CD8-positive, alpha-beta T cell (primary cell): ENCODE measurements at regions of chr13 and their contacts with region 1.

Region 1: GRCh38 chr13:48126944-48127830 is 32.3 kb upstream of the MED4 start:
- DNase-seq: peak; percentile 11 to 84 (median 39)
- ATAC-seq: peak; percentile 93
- H3K4me3 ChIP-seq: peak overlapping the region in 1 of 2 experiments; percentile 6
- H3K4me3 Mint-ChIP-seq: peak overlapping the region; percentile 55
- H3K27ac ChIP-seq: peak overlapping the region; percentile 30 to 75
- H3K27ac Mint-ChIP-seq: peak overlapping the region; percentile 94
- H3K4me1 ChIP-seq: peaks cover 13% of the 10 kb centered on the region
- H3K4me1 Mint-ChIP-seq: peaks cover 31% of the 10 kb centered on the region
- H3K27me3 ChIP-seq: no peaks in the 10 kb centered on the region
- H3K27me3 Mint-ChIP-seq: no peaks in the 10 kb centered on the region
- CTCF ChIP-seq: peak; percentile 80

Region 2: DNA sequence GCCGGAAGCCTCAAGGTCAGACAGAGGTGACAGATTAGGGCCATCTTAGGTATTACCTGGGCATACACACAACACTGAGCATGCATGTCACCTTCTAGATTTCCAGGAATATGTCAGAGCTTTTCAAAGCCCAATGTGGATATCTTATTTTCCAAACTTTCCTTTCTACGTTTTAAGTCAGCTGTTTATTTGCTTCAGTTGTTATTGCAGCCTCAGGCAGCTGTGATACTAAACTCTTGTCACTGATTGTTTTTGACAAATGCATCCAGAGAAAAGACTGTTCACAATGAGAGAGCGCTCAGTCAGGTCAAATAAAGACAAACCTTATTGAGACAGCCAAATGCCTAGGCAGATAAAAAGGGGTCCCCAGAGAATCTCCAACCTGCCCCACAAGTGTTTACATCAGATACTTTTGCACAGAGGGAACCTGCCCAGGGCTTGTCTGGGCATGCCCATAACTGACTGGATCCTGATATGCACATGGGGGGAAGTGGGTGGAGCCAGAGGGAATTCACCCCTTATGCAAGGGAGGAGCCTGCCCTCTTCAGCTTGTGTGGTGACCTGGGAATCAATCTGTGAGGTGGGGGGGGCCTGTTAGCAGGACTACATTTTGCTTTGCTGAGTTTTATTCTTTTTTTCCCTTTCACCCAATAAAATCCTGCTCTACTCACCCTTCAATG is 60.7 kb before region 1 on chr13:
- CTCF ChIA-PET with region 1: no interaction called
- POLR2A ChIA-PET with region 1: no interaction called
- intact Hi-C with region 1: no loop called
- DNase-seq: peak in 4 of 9 experiments; percentile 2 to 42 (median 22)
- ATAC-seq: peak; percentile 54
- H3K4me3 ChIP-seq: no peak overlapping the region
- H3K4me3 Mint-ChIP-seq: no peak overlapping the region
- H3K27ac ChIP-seq: no peak overlapping the region
- H3K27ac Mint-ChIP-seq: no peak overlapping the region
- H3K4me1 ChIP-seq: no peaks in the 10 kb centered on the region
- H3K4me1 Mint-ChIP-seq: no peaks in the 10 kb centered on the region
- H3K27me3 ChIP-seq: no peaks in the 10 kb centered on the region
- H3K27me3 Mint-ChIP-seq: no peaks in the 10 kb centered on the region
- CTCF ChIP-seq: no peak

Region 3: DNA sequence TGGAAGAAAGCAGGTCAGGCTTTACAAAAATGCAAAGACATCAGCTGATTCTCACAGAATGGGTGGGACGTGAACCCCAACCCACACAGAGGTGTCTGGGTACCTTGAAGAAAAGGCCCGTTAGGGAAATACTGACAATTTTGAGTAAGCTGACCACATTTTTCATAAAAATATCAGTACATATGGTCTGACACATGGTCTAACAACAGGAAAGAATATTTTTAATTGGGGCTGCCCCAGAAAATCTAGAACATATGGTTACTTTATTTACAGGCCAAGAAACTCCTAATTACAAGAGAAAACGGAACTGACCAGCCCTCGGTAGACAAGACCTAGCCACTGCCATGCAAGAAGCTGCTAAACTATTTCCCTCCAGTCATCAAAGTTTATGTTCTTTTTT is 57.1 kb after region 1 on chr13:
- CTCF ChIA-PET with region 1: interaction called, 12 read pairs
- POLR2A ChIA-PET with region 1: interaction called, 3 read pairs
- intact Hi-C with region 1: loop called in 1 of 2 experiments (anchors 1 kb)
- DNase-seq: no peak
- ATAC-seq: no peak
- H3K4me3 ChIP-seq: peak overlapping the region in 1 of 2 experiments; percentile 5
- H3K4me3 Mint-ChIP-seq: peak overlapping the region; percentile 26
- H3K27ac ChIP-seq: peak overlapping the region in 1 of 2 experiments; percentile 79
- H3K27ac Mint-ChIP-seq: peak overlapping the region; percentile 97
- H3K4me1 ChIP-seq: peaks cover 68% of the 10 kb centered on the region
- H3K4me1 Mint-ChIP-seq: peaks cover 64% of the 10 kb centered on the region
- H3K27me3 ChIP-seq: no peaks in the 10 kb centered on the region
- H3K27me3 Mint-ChIP-seq: no peaks in the 10 kb centered on the region
- CTCF ChIP-seq: no peak

Region 4: GRCh38 chr13:48222358-48223301 is 95.4 kb after region 1 on chr13:
- CTCF ChIA-PET with region 1: interaction called, 19 read pairs
- POLR2A ChIA-PET with region 1: interaction called, 4 read pairs
- intact Hi-C with region 1: no loop called
- DNase-seq: peak in 1 of 9 experiments; percentile 27
- ATAC-seq: peak; percentile 35
- H3K4me3 ChIP-seq: peak overlapping the region in 1 of 2 experiments; percentile 42
- H3K4me3 Mint-ChIP-seq: peak overlapping the region; percentile 73
- H3K27ac ChIP-seq: peak overlapping the region; percentile 29 to 86
- H3K27ac Mint-ChIP-seq: peak overlapping the region; percentile 91
- H3K4me1 ChIP-seq: peaks cover 54% of the 10 kb centered on the region
- H3K4me1 Mint-ChIP-seq: peaks cover 65% of the 10 kb centered on the region
- H3K27me3 ChIP-seq: no peaks in the 10 kb centered on the region
- H3K27me3 Mint-ChIP-seq: no peaks in the 10 kb centered on the region
- CTCF ChIP-seq: no peak

Region 5: GRCh38 chr13:48334534-48335127 is 207.4 kb after region 1 on chr13:
- CTCF ChIA-PET with region 1: interaction called, 6 read pairs
- POLR2A ChIA-PET with region 1: no interaction called
- intact Hi-C with region 1: loop called in 1 of 2 experiments (anchors 1 kb)
- DNase-seq: peak in 2 of 9 experiments; percentile 63 to 73
- ATAC-seq: peak; percentile 66
- H3K4me3 ChIP-seq: no peak overlapping the region
- H3K4me3 Mint-ChIP-seq: no peak overlapping the region
- H3K27ac ChIP-seq: no peak overlapping the region
- H3K27ac Mint-ChIP-seq: no peak overlapping the region
- H3K4me1 ChIP-seq: no peaks in the 10 kb centered on the region
- H3K4me1 Mint-ChIP-seq: peaks cover 7% of the 10 kb centered on the region
- H3K27me3 ChIP-seq: no peaks in the 10 kb centered on the region
- H3K27me3 Mint-ChIP-seq: no peaks in the 10 kb centered on the region
- CTCF ChIP-seq: peak; percentile 88